ENCODE measurements at regions of chr2 and their contacts with region 1.

Region 1: DNA sequence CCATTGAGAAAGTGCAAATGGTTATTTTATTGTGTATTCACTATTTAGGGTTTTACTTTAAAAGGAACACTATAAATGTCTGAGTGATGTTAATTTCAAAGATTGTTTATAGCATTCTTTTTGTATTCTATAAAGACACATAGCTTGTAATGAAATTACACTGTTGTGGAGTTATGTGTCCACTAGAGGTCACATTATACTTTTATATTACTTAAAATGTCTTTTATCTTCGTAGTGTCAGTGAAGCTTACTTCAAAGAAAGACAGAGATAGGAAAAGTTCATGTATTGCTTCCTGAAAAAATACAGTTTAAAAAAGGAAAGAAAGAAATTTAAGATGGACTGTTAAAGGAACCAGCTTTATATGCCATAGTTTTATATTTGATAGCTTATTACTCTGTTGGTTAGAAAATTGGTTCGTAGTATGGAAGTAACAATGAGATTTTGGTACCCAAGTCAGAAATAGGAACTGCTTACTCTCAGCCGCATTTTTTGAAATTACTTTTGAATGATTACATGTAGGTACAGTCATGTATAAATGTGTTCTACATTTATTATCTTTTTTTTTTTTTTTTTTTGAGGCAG is 20.5 kb downstream of the APLF start:
- DNase-seq: no peak
- H3K4me3 Mint-ChIP-seq: no peak overlapping the region
- H3K27ac Mint-ChIP-seq: no peak overlapping the region
- H3K4me1 Mint-ChIP-seq: peaks cover 4% of the 10 kb centered on the region
- H3K27me3 Mint-ChIP-seq: no peaks in the 10 kb centered on the region

Region 2: GRCh38 chr2:68516051-68516955 is 28.4 kb after region 1 on chr2:
- CTCF ChIA-PET with region 1: interaction called, 13 read pairs
- POLR2A ChIA-PET with region 1: no interaction called
- DNase-seq: no peak
- H3K4me3 Mint-ChIP-seq: no peak overlapping the region
- H3K27ac Mint-ChIP-seq: no peak overlapping the region
- H3K4me1 Mint-ChIP-seq: peaks cover 17% of the 10 kb centered on the region
- H3K27me3 Mint-ChIP-seq: no peaks in the 10 kb centered on the region

Region 3: DNA sequence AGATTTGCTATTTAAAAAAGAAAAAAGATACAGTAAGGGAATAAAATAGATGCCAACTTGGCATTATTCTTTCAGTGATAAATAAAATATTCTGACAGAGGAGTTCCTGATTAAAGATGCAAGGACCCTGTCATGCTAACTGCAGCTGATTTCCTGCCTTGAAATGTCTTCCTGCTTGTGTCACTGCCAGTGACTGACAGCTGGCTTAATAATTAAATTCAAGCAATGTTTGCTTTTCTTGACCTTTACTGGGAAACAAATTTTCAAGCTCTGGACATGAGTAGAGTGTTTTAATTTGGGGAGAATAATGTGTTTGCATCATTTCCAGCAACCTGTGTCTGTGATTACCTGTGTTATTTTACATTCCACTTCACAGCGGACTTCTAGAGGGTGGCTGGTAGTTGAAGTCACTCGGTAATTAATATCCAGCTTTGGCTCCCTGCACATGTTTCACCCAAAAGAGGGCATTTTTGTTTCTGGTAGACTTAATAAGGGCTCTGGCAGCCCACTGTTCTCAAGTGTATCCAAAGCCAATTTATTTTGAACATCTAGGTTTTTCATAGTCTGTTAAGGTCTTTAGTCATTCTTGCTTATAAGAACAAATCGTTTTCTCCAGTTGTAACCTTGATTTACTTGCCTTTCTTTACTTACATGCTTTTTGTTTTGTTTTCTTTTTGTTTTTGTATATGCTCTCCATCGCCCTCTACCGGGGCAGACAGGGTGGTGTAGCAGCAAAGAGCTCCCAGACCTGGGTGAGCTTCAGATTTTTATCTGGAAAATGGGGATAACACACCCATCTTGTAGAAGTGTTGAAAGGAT is 107.0 kb after region 1 on chr2:
- CTCF ChIA-PET with region 1: interaction called, 21 read pairs
- POLR2A ChIA-PET with region 1: no interaction called
- DNase-seq: peak; percentile 63
- H3K4me3 Mint-ChIP-seq: peak overlapping the region; percentile 34
- H3K27ac Mint-ChIP-seq: no peak overlapping the region
- H3K4me1 Mint-ChIP-seq: peaks cover 11% of the 10 kb centered on the region
- H3K27me3 Mint-ChIP-seq: peaks cover 12% of the 10 kb centered on the region

Region 4: DNA sequence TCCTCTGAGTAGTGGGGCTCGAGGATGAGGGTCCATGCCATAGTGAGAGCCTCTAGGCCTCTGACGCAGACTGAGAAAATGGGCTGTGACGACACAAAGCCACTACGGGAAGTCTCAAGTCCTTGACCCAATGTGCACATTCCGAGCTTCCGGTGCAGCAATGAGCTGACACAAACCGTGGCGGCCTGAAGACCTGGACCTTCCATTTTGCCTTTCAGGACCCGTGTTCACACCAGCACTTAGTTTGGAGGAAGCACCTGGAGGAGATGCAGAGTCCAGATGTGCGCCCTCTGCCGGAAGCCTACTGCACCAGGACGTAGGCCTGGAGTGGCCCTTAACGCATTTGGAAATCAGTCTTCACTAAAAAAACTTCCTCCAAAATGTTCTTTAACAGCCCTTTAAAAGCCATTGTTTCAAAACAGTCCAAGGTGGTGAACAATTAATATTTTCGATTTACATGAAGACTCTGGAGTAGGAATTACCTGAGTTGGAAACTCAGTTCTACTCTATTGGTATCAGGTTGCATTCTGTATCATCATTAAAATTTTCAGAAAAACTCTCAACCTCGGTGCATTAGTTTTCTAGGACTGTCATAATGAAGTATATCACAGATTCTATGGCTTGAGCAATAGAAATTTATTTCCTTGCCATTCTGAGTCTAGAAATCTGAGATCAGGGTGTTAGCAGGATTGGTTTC is 349.4 kb after region 1 on chr2:
- CTCF ChIA-PET with region 1: interaction called, 11 read pairs
- POLR2A ChIA-PET with region 1: no interaction called
- DNase-seq: peak; percentile 67
- H3K4me3 Mint-ChIP-seq: no peak overlapping the region
- H3K27ac Mint-ChIP-seq: peak overlapping the region; percentile 28
- H3K4me1 Mint-ChIP-seq: peaks cover 43% of the 10 kb centered on the region
- H3K27me3 Mint-ChIP-seq: peaks cover 4% of the 10 kb centered on the region